OCI-LY7 (cell line): ENCODE measurements at regions of chr5 and their contacts with region 1.

Region 1: DNA sequence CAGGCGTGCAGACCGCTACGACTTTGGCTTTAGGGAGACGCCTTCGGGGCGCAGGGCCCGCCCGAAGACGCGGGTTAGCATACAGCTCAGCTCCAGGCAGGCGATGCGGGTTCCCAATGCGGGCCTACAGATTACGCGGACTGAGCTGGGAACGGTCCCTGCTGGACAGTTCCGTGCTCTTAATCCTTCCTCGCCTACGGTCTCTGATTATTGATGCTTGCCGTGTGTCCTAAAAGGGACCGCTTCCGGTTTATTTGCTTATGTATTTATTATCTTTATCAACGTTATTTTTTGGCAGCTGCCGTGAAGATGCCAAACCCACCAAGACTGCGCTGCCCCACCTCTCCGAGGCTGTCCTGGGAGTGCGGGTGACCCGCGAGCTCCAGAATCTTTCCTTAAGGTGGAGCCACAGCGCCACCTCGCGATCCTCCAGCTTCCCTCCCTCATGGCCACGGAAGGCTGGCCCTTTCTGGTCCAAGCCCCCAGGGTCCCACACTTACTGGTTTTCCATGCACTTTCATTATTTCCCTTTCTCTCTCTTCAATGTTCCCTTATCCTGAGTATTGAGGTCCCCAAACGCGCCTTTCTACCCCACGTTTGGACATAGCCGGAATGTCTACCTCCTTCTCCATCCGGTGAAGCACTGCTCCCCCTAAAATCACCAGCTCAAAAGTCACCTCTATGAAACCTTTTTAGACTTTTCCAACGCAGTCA is 7.0 kb upstream of the EBF1 start:
- DNase-seq: peak; percentile 89
- H3K4me3 ChIP-seq: peak overlapping the region; percentile 51
- H3K27ac ChIP-seq: peak overlapping the region; percentile 2
- H3K4me1 ChIP-seq: peaks cover 42% of the 10 kb centered on the region
- CTCF ChIP-seq: peak; percentile 96

Region 2: GRCh38 chr5:158074992-158075769 is 1031.5 kb before region 1 on chr5:
- CTCF ChIA-PET with region 1: interaction called, 7 read pairs
- POLR2A ChIA-PET with region 1: no interaction called
- intact Hi-C with region 1: loop called (anchors 1 kb)
- DNase-seq: peak; percentile 69
- H3K4me3 ChIP-seq: no peak overlapping the region
- H3K27ac ChIP-seq: no peak overlapping the region
- H3K4me1 ChIP-seq: peaks cover 4% of the 10 kb centered on the region
- CTCF ChIP-seq: peak; percentile 98

Region 3: GRCh38 chr5:158135682-158136179 is 971.0 kb before region 1 on chr5:
- CTCF ChIA-PET with region 1: no interaction called
- POLR2A ChIA-PET with region 1: no interaction called
- intact Hi-C with region 1: no loop called
- DNase-seq: no peak
- H3K4me3 ChIP-seq: no peak overlapping the region
- H3K27ac ChIP-seq: no peak overlapping the region
- H3K4me1 ChIP-seq: no peaks in the 10 kb centered on the region
- CTCF ChIP-seq: no peak